ENCODE measurements at regions of chr7 and their contacts with region 1.

Region 1: GRCh38 chr7:81469869-81470723 is 299.8 kb downstream of the HGF start:
- DNase-seq: peak; percentile 52 to 90
- ATAC-seq: peak; percentile 90 to 97
- H3K4me3 ChIP-seq: no peak overlapping the region
- H3K27ac ChIP-seq: peak overlapping the region; percentile 49 to 82
- H3K4me1 ChIP-seq: peaks cover 20% of the 10 kb centered on the region
- CTCF ChIP-seq: peak; percentile 92
- EP300 ChIP-seq: no peak
- POLR2A ChIP-seq: no peak
- RAD21 ChIP-seq: peak; percentile 96 to 97

Region 2: GRCh38 chr7:80699045-80699638 is 771.0 kb before region 1 on chr7:
- CTCF ChIA-PET with region 1: interaction called, 45 read pairs
- POLR2A ChIA-PET with region 1: no interaction called
- DNase-seq: peak; percentile 17 to 66
- ATAC-seq: peak; percentile 57 to 82; a peak in 5 of 6 replicates
- H3K4me3 ChIP-seq: no peak overlapping the region
- H3K27ac ChIP-seq: peak overlapping the region; percentile 84 to 90
- H3K4me1 ChIP-seq: peaks cover 37% of the 10 kb centered on the region
- CTCF ChIP-seq: peak; percentile 89
- EP300 ChIP-seq: no peak
- POLR2A ChIP-seq: no peak
- RAD21 ChIP-seq: peak; percentile 95 to 97

Region 3: DNA sequence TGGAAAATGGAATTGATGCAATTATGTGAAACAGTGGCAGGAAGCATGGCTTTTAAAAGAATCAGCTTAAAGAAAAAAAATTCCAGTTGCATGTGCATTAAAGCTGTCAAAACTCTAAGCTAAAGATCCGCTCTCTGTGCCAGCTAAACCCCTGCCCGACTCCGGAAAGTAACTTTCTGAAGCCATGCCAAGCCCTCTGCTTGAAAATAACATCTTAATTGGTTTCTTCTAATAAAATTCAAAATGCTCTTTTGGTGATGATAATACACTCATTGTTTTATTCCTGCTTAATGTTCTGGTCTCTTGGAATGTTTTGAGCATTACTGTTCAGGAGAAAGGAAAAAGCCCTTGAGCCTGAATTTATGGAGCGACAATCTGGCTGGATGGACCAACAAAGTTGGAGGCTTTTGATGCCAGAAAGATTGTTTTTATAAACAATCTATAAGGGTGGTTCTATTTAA is 562.9 kb before region 1 on chr7:
- CTCF ChIA-PET with region 1: interaction called, 20 read pairs
- POLR2A ChIA-PET with region 1: no interaction called
- DNase-seq: no peak
- ATAC-seq: no peak
- H3K4me3 ChIP-seq: no peak overlapping the region
- H3K27ac ChIP-seq: peak overlapping the region; percentile 36 to 38; a peak in 5 of 6 replicates
- H3K4me1 ChIP-seq: peaks cover 81% of the 10 kb centered on the region
- CTCF ChIP-seq: no peak
- EP300 ChIP-seq: no peak
- POLR2A ChIP-seq: no peak
- RAD21 ChIP-seq: no peak

Region 4: DNA sequence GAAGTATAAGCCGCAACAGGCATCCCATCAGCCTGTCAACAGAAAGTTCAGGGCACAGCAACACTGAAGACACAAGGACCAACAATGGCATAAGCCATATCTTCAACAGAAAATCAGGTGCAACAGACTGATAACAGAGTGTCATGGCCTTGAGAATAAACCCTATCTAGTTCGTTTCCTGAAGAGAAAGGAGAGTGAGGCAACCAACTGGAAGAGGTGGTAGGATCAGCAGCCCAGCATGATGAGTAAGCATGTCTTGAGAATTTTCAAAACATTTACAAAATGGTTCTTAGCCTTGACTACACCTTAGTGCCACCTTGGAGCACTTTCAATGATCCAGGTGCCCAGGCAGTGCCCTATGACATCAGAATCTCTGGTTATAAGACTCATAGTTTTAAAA is 261.0 kb before region 1 on chr7:
- CTCF ChIA-PET with region 1: no interaction called
- POLR2A ChIA-PET with region 1: no interaction called
- DNase-seq: no peak
- ATAC-seq: no peak
- H3K4me3 ChIP-seq: no peak overlapping the region
- H3K27ac ChIP-seq: peak overlapping the region in 1 of 2 experiments; percentile 45; a peak in 3 of 6 replicates
- H3K4me1 ChIP-seq: peaks cover 23% of the 10 kb centered on the region
- CTCF ChIP-seq: no peak
- EP300 ChIP-seq: no peak
- POLR2A ChIP-seq: no peak
- RAD21 ChIP-seq: no peak

Region 5: GRCh38 chr7:81447351-81447952 is 22.6 kb before region 1 on chr7:
- CTCF ChIA-PET with region 1: interaction called, 11 read pairs
- POLR2A ChIA-PET with region 1: no interaction called
- DNase-seq: peak; percentile 21 to 83
- ATAC-seq: peak; percentile 94 to 98
- H3K4me3 ChIP-seq: no peak overlapping the region
- H3K27ac ChIP-seq: peak overlapping the region; percentile 8 to 62; a peak in 4 of 6 replicates
- H3K4me1 ChIP-seq: 0 out of 3 replicates have a peak, but pooled peaks cover 3% of the 10 kb centered on the region
- CTCF ChIP-seq: peak; percentile 75
- EP300 ChIP-seq: no peak
- POLR2A ChIP-seq: no peak
- RAD21 ChIP-seq: peak; percentile 89 to 94

Region 6: DNA sequence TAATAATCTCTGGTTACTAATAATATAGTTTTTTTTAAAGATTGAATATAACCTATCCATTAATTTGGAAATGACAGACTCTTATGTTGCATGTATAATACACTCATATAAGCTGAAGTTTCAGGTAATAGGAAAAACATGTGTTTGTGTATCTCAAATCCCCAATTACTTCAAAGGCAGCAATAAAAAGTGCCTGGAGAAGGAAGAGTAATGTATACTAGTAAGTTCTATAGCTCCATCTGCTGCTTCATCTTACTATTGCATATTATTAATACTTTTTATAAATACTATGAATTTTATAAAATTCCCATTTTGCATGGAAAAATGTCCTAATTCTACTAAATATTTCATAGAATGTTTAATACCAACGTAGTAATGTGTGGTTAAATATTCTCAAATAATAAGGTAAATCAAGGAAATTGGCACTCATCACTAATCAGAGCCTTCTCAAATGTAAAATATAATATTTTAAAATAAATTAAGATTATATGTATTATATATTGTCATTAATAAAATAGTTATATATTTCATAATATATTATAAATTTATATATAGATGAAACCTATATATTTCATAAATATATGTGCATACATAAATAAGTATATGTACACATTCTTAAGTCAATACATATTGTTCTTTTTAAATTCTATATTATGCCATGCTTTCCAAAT is 12.1 kb before region 1 on chr7:
- CTCF ChIA-PET with region 1: interaction called, 31 read pairs
- POLR2A ChIA-PET with region 1: no interaction called
- DNase-seq: peak; percentile 28 to 50
- ATAC-seq: no peak
- H3K4me3 ChIP-seq: no peak overlapping the region
- H3K27ac ChIP-seq: peak overlapping the region; percentile 17 to 76; a peak in 4 of 6 replicates
- H3K4me1 ChIP-seq: peaks cover 25% of the 10 kb centered on the region
- CTCF ChIP-seq: peak; percentile 69
- EP300 ChIP-seq: no peak
- POLR2A ChIP-seq: no peak
- RAD21 ChIP-seq: peak; percentile 82 to 90

Region 7: GRCh38 chr7:81482600-81483186 is 12.6 kb after region 1 on chr7:
- CTCF ChIA-PET with region 1: interaction called, 17 read pairs
- POLR2A ChIA-PET with region 1: no interaction called
- DNase-seq: peak; percentile 28 to 57
- ATAC-seq: peak in 1 of 2 experiments; percentile 69; a peak in 3 of 6 replicates
- H3K4me3 ChIP-seq: no peak overlapping the region
- H3K27ac ChIP-seq: no peak overlapping the region; a peak in 1 of 6 replicates
- H3K4me1 ChIP-seq: no peaks in the 10 kb centered on the region
- CTCF ChIP-seq: peak; percentile 76
- EP300 ChIP-seq: no peak
- POLR2A ChIP-seq: no peak
- RAD21 ChIP-seq: peak; percentile 73 to 87

Measured in A549 (cell line).